K562 (cell line): ENCODE measurements at regions of chr1 and their contacts with region 1.

Region 1: DNA sequence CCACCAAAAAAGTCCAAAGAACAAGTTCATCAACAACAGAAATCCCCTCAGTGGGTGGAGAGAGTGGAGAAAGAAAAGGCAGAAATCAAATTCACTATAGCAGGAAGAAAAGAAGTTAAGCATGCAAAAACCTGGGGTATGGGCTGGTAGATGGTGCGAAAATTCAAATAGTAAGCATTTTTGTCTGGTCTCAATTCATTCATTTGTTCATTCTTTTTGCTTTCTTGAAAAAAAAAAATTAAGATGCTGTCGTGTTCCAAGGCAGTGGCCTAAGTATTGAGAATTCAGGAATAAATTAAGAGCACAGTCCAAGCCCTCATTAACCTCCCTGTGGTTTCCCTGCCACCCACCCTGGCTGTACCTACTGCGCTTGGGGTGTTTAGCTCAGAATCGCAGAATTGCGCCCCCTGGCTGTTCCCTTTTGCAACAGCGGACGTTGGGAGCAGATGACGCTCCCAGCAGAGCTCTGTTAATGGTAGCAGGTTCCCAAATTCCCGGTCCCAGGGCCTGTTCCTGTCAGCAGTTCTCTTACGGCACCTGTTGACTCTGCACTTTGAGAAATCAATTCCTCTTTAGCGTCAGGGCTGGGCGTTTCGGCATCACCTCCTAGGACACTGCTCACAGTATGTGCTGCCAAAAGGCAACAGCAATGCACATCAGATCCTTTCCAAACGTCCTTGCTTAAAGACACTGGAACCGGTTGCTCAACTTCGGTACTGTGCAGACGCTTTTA is 34.0 kb upstream of the SSX2IP start:
- DNase-seq: peak; percentile 75 to 85 (median 77)
- ATAC-seq: peak; percentile 92
- H3K4me3 ChIP-seq: no peak overlapping the region
- H3K27ac ChIP-seq: no peak overlapping the region
- H3K4me1 ChIP-seq: peaks cover 5 to 36% of the 10 kb centered on the region in 2 experiments; a peak in 4 of 5 replicates
- H3K27me3 ChIP-seq: no peaks in the 10 kb centered on the region
- CTCF ChIP-seq: peak; percentile 86 to 93 (median 87)
- EP300 ChIP-seq: no peak
- POLR2A ChIP-seq: no peak
- RAD21 ChIP-seq: peak; percentile 65 to 80

Region 2: GRCh38 chr1:84653130-84653677 is 71.1 kb before region 1 on chr1:
- CTCF ChIA-PET with region 1: no interaction called
- POLR2A ChIA-PET with region 1: interaction called, 3 read pairs
- in situ Hi-C with region 1: no loop called
- intact Hi-C with region 1: loop called (anchors 5 kb)
- DNase-seq: no peak
- ATAC-seq: 0 out of 3 replicates have a peak, but pooled peaks have one; percentile 47
- H3K4me3 ChIP-seq: no peak overlapping the region
- H3K27ac ChIP-seq: no peak overlapping the region
- H3K4me1 ChIP-seq: no peaks in the 10 kb centered on the region
- H3K27me3 ChIP-seq: no peaks in the 10 kb centered on the region
- CTCF ChIP-seq: no peak; a peak in 1 of 6 replicates
- EP300 ChIP-seq: no peak
- POLR2A ChIP-seq: no peak
- RAD21 ChIP-seq: no peak; a peak in 1 of 4 replicates

Region 3: DNA sequence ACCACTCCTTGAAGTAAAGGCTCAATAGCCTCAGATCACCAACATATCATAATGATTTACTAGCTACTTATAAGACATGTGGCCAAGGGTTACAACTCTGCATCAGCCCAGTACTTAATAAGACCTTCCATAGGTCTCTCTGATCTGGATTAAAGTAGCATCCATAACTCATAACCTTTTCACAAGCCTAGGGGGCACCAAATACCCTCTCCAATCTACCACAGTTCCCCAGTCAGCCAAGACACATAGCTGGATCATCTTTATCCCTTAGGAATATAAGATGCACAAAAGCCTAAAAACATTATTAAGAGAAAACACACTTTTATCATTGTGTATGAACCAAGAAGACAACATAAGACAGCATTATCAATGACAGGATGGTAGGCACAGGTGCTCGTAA is 56.1 kb before region 1 on chr1:
- CTCF ChIA-PET with region 1: interaction called, 7 read pairs
- POLR2A ChIA-PET with region 1: interaction called, 4 read pairs
- in situ Hi-C with region 1: no loop called
- intact Hi-C with region 1: loop called (anchors 1 kb)
- DNase-seq: peak in 3 of 4 experiments; percentile 13 to 40 (median 28)
- ATAC-seq: peak; percentile 86
- H3K4me3 ChIP-seq: no peak overlapping the region
- H3K27ac ChIP-seq: no peak overlapping the region
- H3K4me1 ChIP-seq: peaks cover 3 to 5% of the 10 kb centered on the region in 2 experiments; a peak in 2 of 5 replicates
- H3K27me3 ChIP-seq: no peaks in the 10 kb centered on the region
- CTCF ChIP-seq: peak; percentile 43 to 68 (median 48); a peak in 5 of 6 replicates
- EP300 ChIP-seq: no peak
- POLR2A ChIP-seq: no peak
- RAD21 ChIP-seq: peak; percentile 58 to 76

Region 4: GRCh38 chr1:84690397-84691121 is 33.7 kb before region 1 on chr1 and contains the start of gene SSX2IP:
- CTCF ChIA-PET with region 1: no interaction called
- POLR2A ChIA-PET with region 1: interaction called, 3 read pairs
- in situ Hi-C with region 1: no loop called
- intact Hi-C with region 1: loop called (anchors 1 kb)
- DNase-seq: peak; percentile 98 to 100 (median 100)
- ATAC-seq: peak; percentile 82
- H3K4me3 ChIP-seq: peak within 1 kb of the TSS; percentile 76
- H3K27ac ChIP-seq: peak within 1 kb of the TSS; percentile 92
- H3K4me1 ChIP-seq: peaks cover 17 to 33% of the 10 kb centered on the region in 2 experiments
- H3K27me3 ChIP-seq: no peaks in the 10 kb centered on the region; a peak in 1 of 5 replicates
- CTCF ChIP-seq: no peak; a peak in 2 of 6 replicates
- EP300 ChIP-seq: peak; percentile 41
- POLR2A ChIP-seq: peak; percentile 53
- RAD21 ChIP-seq: no peak
- polyA plus RNA-seq, gene SSX2IP: 20.6 to 25.8 TPM

Region 5: GRCh38 chr1:84745857-84746256 is 21.6 kb after region 1 on chr1:
- CTCF ChIA-PET with region 1: no interaction called
- POLR2A ChIA-PET with region 1: no interaction called
- in situ Hi-C with region 1: no loop called
- intact Hi-C with region 1: no loop called
- DNase-seq: no peak
- ATAC-seq: no peak
- H3K4me3 ChIP-seq: no peak overlapping the region
- H3K27ac ChIP-seq: no peak overlapping the region
- H3K4me1 ChIP-seq: no peaks in the 10 kb centered on the region; a peak in 1 of 5 replicates
- H3K27me3 ChIP-seq: peaks cover 3 to 6% of the 10 kb centered on the region in 2 experiments; a peak in 2 of 5 replicates
- CTCF ChIP-seq: no peak
- EP300 ChIP-seq: no peak
- POLR2A ChIP-seq: no peak
- RAD21 ChIP-seq: no peak

Region 6: DNA sequence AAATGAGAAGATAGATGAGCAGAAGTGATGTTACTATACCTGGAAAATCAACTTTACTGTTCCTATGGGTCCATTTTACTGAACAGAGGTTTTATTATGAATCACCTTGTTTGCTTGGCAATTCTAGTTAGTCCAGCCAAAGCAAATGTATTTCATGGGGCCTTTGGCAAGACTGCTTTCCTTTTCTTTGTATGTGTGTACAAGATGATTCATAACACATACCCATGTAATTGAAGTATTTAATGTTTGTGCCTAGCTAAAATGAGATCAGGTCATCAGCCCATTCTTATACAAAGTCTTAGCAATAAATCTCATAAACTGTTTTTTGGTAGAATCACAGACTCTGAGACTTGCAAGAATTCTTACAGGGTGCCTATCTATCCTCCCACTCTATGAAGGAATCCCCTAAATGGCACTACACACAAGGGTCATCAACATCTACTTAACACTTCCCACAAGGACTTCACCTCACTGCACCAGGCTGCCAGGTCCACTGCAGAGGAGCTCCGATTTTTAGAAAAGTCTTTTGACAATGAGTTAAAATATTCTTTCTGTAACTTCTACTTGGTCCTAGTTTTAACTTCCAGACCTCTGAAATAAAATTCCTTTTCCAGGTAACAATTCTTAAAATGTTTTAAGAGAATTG is 110.2 kb after region 1 on chr1:
- CTCF ChIA-PET with region 1: no interaction called
- POLR2A ChIA-PET with region 1: no interaction called
- in situ Hi-C with region 1: no loop called
- intact Hi-C with region 1: no loop called
- DNase-seq: no peak
- ATAC-seq: no peak
- H3K4me3 ChIP-seq: no peak overlapping the region
- H3K27ac ChIP-seq: no peak overlapping the region
- H3K4me1 ChIP-seq: no peaks in the 10 kb centered on the region
- H3K27me3 ChIP-seq: no peaks in the 10 kb centered on the region; a peak in 1 of 5 replicates
- CTCF ChIP-seq: no peak
- EP300 ChIP-seq: no peak
- POLR2A ChIP-seq: no peak
- RAD21 ChIP-seq: no peak